CD4-positive, alpha-beta T cell (primary cell): ENCODE measurements at regions of chr7 and their contacts with region 1.

Region 1: GRCh38 chr7:130205084-130205947 is at the start of gene TMEM209:
- DNase-seq: peak; percentile 85 to 98 (median 91)
- ATAC-seq: peak; percentile 96
- H3K4me3 ChIP-seq: peak within 1 kb of the TSS; percentile 88
- H3K4me3 Mint-ChIP-seq: peak within 1 kb of the TSS; percentile 96
- H3K27ac ChIP-seq: peak within 1 kb of the TSS; percentile 81 to 87
- H3K27ac Mint-ChIP-seq: peak within 1 kb of the TSS; percentile 89
- H3K4me1 ChIP-seq: peaks cover 20% of the 10 kb centered on the region
- H3K4me1 Mint-ChIP-seq: peaks cover 40% of the 10 kb centered on the region
- H3K27me3 ChIP-seq: no peaks in the 10 kb centered on the region
- H3K27me3 Mint-ChIP-seq: no peaks in the 10 kb centered on the region
- CTCF ChIP-seq: no peak
- total RNA-seq, gene TMEM209: 18.3 to 18.8 TPM

Region 2: DNA sequence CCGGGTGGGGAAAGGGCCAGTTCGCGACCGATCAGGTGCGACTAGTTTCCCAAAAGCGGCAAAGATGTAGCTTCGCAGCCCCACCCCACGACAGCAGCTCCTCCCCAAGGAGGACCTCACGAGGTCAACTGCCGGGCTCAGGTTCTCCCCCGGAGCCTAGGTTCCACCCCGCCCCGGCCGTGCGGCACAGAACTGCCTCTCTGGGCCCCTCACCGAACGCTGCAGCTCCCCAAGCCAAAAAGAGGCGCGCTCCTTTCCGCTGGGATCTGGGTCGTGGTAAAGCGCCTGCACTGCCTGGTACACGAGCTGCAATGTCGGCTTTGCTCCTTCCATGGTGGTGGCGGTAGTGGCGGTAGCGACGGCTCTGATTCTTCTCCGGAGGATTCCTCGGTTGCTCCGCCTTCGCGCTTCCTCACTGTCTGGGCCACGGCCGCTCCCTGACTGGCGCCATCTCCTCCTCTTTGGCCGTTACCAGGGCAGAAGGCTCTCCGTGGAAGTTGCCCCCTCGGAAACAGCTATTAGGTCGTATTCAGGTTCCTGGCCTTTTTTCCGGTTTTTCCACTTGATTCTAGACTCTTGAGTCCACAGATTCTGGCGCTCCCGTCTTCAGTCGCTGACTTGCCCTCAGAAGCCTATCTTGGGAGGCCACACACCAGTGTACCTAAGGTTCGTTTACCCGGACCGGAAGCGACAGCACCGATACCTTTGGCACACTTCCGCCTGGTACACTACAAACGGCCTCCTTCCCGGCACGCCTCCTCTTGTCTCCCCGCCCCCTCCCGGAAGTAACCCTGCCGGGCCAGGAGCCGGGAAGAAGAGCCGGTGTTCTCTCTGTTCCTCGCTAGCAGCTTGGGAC is 1150.7 kb before region 1 on chr7 and contains the start of gene TNPO3:
- CTCF ChIA-PET with region 1: no interaction called
- POLR2A ChIA-PET with region 1: no interaction called
- intact Hi-C with region 1: loop called in 1 of 2 experiments (anchors 5 kb)
- DNase-seq: peak; percentile 80 to 94 (median 86)
- ATAC-seq: peak; percentile 87
- H3K4me3 ChIP-seq: peak within 1 kb of the TSS; percentile 88
- H3K4me3 Mint-ChIP-seq: peak within 1 kb of the TSS; percentile 99
- H3K27ac ChIP-seq: peak within 1 kb of the TSS; percentile 91 to 98
- H3K27ac Mint-ChIP-seq: peak within 1 kb of the TSS; percentile 96
- H3K4me1 ChIP-seq: peaks cover 25% of the 10 kb centered on the region
- H3K4me1 Mint-ChIP-seq: peaks cover 49% of the 10 kb centered on the region
- H3K27me3 ChIP-seq: peaks cover 0 to 4% of the 10 kb centered on the region in 2 experiments
- H3K27me3 Mint-ChIP-seq: no peaks in the 10 kb centered on the region
- CTCF ChIP-seq: no peak
- total RNA-seq, gene TNPO3: 17.1 to 18.7 TPM

Region 3: GRCh38 chr7:130050773-130051125 is 154.6 kb before region 1 on chr7:
- CTCF ChIA-PET with region 1: no interaction called
- POLR2A ChIA-PET with region 1: no interaction called
- intact Hi-C with region 1: loop called in 1 of 2 experiments (anchors 5 kb)
- DNase-seq: no peak
- ATAC-seq: no peak
- H3K4me3 ChIP-seq: peak overlapping the region; percentile 85
- H3K4me3 Mint-ChIP-seq: peak overlapping the region; percentile 98
- H3K27ac ChIP-seq: peak overlapping the region; percentile 29 to 45
- H3K27ac Mint-ChIP-seq: peak overlapping the region; percentile 81
- H3K4me1 ChIP-seq: peaks cover 15% of the 10 kb centered on the region
- H3K4me1 Mint-ChIP-seq: peaks cover 10% of the 10 kb centered on the region
- H3K27me3 ChIP-seq: no peaks in the 10 kb centered on the region
- H3K27me3 Mint-ChIP-seq: no peaks in the 10 kb centered on the region
- CTCF ChIP-seq: no peak

Region 4: GRCh38 chr7:130149281-130150139 is 55.8 kb before region 1 on chr7:
- CTCF ChIA-PET with region 1: no interaction called
- POLR2A ChIA-PET with region 1: no interaction called
- intact Hi-C with region 1: no loop called
- DNase-seq: no peak
- ATAC-seq: no peak
- H3K4me3 ChIP-seq: no peak overlapping the region
- H3K4me3 Mint-ChIP-seq: peak overlapping the region; percentile 34
- H3K27ac ChIP-seq: no peak overlapping the region
- H3K27ac Mint-ChIP-seq: no peak overlapping the region
- H3K4me1 ChIP-seq: peaks cover 15% of the 10 kb centered on the region
- H3K4me1 Mint-ChIP-seq: no peaks in the 10 kb centered on the region
- H3K27me3 ChIP-seq: no peaks in the 10 kb centered on the region
- H3K27me3 Mint-ChIP-seq: no peaks in the 10 kb centered on the region
- CTCF ChIP-seq: no peak

Region 5: DNA sequence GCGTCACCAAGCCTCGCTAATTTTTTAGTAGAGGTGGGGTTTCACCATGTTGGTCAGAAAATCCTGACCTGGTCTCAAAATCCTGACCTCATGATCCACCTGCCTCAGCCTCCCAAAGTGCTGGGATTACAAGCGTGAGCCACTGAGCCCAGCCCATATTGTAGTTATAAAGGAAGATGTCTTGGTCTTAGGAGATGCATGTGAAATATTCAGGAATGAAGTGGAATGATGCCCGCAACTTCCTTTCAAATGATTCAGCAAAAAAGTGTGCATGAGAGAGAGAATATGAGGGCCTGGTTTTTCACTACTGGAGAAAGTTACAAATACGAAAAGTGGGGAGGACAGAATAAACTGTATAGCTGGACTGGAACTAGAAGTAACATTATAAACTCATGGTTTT is 16.0 kb before region 1 on chr7:
- CTCF ChIA-PET with region 1: no interaction called
- POLR2A ChIA-PET with region 1: interaction called, 10 read pairs
- intact Hi-C with region 1: no loop called
- DNase-seq: no peak
- ATAC-seq: no peak
- H3K4me3 ChIP-seq: no peak overlapping the region
- H3K4me3 Mint-ChIP-seq: no peak overlapping the region
- H3K27ac ChIP-seq: no peak overlapping the region
- H3K27ac Mint-ChIP-seq: no peak overlapping the region
- H3K4me1 ChIP-seq: no peaks in the 10 kb centered on the region
- H3K4me1 Mint-ChIP-seq: peaks cover 7% of the 10 kb centered on the region
- H3K27me3 ChIP-seq: no peaks in the 10 kb centered on the region
- H3K27me3 Mint-ChIP-seq: no peaks in the 10 kb centered on the region
- CTCF ChIP-seq: no peak

Region 6: GRCh38 chr7:130463553-130464434 is 258.5 kb after region 1 on chr7:
- CTCF ChIA-PET with region 1: no interaction called
- POLR2A ChIA-PET with region 1: no interaction called
- intact Hi-C with region 1: no loop called
- DNase-seq: peak in 1 of 14 experiments; percentile 13
- ATAC-seq: no peak
- H3K4me3 ChIP-seq: no peak overlapping the region
- H3K4me3 Mint-ChIP-seq: no peak overlapping the region
- H3K27ac ChIP-seq: no peak overlapping the region
- H3K27ac Mint-ChIP-seq: no peak overlapping the region
- H3K4me1 ChIP-seq: no peaks in the 10 kb centered on the region
- H3K4me1 Mint-ChIP-seq: peaks cover 8% of the 10 kb centered on the region
- H3K27me3 ChIP-seq: no peaks in the 10 kb centered on the region
- H3K27me3 Mint-ChIP-seq: no peaks in the 10 kb centered on the region
- CTCF ChIP-seq: peak; percentile 6

Region 7: GRCh38 chr7:130668257-130669084 is 463.2 kb after region 1 on chr7 and contains the start of gene COPG2:
- CTCF ChIA-PET with region 1: no interaction called
- POLR2A ChIA-PET with region 1: no interaction called
- intact Hi-C with region 1: loop called in 1 of 2 experiments (anchors 2 kb)
- DNase-seq: peak; percentile 21 to 85 (median 68)
- ATAC-seq: peak; percentile 77
- H3K4me3 ChIP-seq: peak within 1 kb of the TSS; percentile 83
- H3K4me3 Mint-ChIP-seq: peak within 1 kb of the TSS; percentile 95
- H3K27ac ChIP-seq: peak within 1 kb of the TSS; percentile 39 to 41
- H3K27ac Mint-ChIP-seq: peak within 1 kb of the TSS; percentile 82
- H3K4me1 ChIP-seq: peaks cover 13% of the 10 kb centered on the region
- H3K4me1 Mint-ChIP-seq: peaks cover 21% of the 10 kb centered on the region
- H3K27me3 ChIP-seq: no peaks in the 10 kb centered on the region
- H3K27me3 Mint-ChIP-seq: no peaks in the 10 kb centered on the region
- CTCF ChIP-seq: no peak
- total RNA-seq, gene COPG2: 4.1 to 4.3 TPM